Activated CD4-positive, alpha-beta memory T cell treated with anti-CD3 and anti-CD28 coated beads, Interleukin-2, amount 10 ng/mL, durations not matched to agents 7 days and 5 days (primary cell): ENCODE measurements at regions of chr5 and their contacts with region 1.

Region 1: DNA sequence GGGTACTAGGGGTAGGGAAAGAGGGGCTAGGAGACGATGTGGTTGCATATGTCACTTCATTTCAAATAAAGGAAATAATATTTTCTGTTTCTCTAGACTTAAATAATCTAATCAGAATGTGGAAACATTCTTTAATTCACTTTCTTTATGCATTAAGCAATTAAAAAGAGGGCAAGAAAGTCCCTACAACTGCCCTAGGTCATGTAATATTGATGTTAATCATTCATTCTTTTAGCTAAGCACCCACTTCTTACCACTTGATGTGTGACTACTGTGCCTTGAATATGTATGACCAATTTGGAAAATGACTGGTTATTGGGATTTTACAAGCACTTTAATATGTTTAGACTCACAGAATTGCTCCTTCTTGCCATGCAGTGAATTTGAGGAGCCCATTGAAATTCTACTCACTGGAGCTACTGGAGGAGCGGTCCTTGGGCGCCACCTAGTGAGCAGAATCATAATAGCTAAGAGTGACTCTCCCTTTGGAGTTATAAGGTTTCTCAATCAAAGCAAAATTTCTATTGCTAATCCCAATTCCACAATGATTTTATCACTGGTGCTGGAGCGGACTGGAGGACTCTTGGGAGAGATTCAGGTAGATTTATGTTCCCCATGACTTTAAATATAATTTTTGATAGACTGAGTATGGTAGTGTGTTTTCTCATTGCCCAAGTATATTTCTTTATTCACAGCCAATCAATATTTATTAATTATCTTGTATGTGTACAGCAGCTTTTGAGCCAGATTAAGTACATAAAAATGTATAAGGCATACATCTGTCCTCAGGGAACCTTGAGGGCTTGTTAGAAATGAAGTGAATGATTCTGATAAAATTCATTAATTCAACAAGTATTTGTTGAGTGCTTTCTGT is 225.1 kb downstream of the ADGRV1 start:
- DNase-seq: peak; percentile 62
- H3K4me3 Mint-ChIP-seq: no peak overlapping the region
- H3K27ac Mint-ChIP-seq: no peak overlapping the region
- H3K4me1 Mint-ChIP-seq: no peaks in the 10 kb centered on the region
- H3K27me3 Mint-ChIP-seq: peaks cover 10% of the 10 kb centered on the region

Region 2: GRCh38 chr5:90709323-90710155 is 74.2 kb before region 1 on chr5:
- CTCF ChIA-PET with region 1: interaction called, 15 read pairs
- POLR2A ChIA-PET with region 1: no interaction called
- DNase-seq: no peak
- H3K4me3 Mint-ChIP-seq: no peak overlapping the region
- H3K27ac Mint-ChIP-seq: no peak overlapping the region
- H3K4me1 Mint-ChIP-seq: no peaks in the 10 kb centered on the region
- H3K27me3 Mint-ChIP-seq: peaks cover 3% of the 10 kb centered on the region